ENCODE measurements at regions of chr17 and their contacts with region 1.

Region 1: DNA sequence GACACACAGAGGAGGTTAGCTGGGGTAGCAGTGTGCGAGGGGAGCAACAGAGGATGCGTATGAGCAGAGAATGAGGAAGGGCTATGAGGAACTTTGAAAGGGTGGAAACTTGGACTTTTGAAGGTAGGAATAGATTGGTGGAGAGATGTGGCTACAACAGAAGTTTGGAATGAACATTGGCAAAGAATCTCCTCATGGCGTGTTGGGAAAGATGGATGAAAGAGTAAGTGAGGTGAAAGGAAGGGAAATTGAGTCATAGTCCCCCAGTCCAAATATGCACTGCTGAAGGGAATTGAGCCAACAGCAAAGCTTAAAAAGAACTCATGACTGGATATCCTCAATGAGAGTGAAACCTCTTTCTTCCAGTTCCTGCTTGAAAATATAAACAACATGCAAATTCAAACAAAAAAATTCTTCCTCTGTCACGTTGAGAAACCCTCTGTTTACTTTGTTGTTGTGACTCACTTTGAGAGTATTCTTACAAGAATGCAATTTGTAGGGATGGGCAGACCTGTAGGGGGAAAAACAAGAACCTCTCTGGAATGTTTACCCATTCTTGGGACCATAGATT is 313.2 kb upstream of the KCNJ16 start:
- DNase-seq: peak; percentile 86
- H3K4me3 ChIP-seq: no peak overlapping the region
- H3K27ac ChIP-seq: peak overlapping the region; percentile 91
- H3K4me1 ChIP-seq: peaks cover 21% of the 10 kb centered on the region
- H3K27me3 ChIP-seq: no peaks in the 10 kb centered on the region
- CTCF ChIP-seq: no peak
- POLR2A ChIP-seq: no peak

Region 2: GRCh38 chr17:69501591-69502468 is 260.0 kb before region 1 on chr17:
- CTCF ChIA-PET with region 1: no interaction called
- POLR2A ChIA-PET with region 1: no interaction called
- dilution Hi-C with region 1: no loop called
- intact Hi-C with region 1: no loop called
- DNase-seq: peak; percentile 59
- H3K4me3 ChIP-seq: peak overlapping the region in 1 of 3 experiments; percentile 46
- H3K27ac ChIP-seq: peak overlapping the region; percentile 21
- H3K4me1 ChIP-seq: peaks cover 12% of the 10 kb centered on the region
- H3K27me3 ChIP-seq: no peaks in the 10 kb centered on the region
- CTCF ChIP-seq: no peak
- POLR2A ChIP-seq: no peak

Region 3: GRCh38 chr17:69672924-69673323 is 88.9 kb before region 1 on chr17:
- CTCF ChIA-PET with region 1: no interaction called
- POLR2A ChIA-PET with region 1: no interaction called
- dilution Hi-C with region 1: no loop called
- intact Hi-C with region 1: loop called (anchors 1 kb)
- DNase-seq: peak; percentile 81
- H3K4me3 ChIP-seq: no peak overlapping the region
- H3K27ac ChIP-seq: peak overlapping the region; percentile 70
- H3K4me1 ChIP-seq: peaks cover 18% of the 10 kb centered on the region
- H3K27me3 ChIP-seq: no peaks in the 10 kb centered on the region
- CTCF ChIP-seq: no peak
- POLR2A ChIP-seq: peak; percentile 65

Region 4: GRCh38 chr17:69733171-69734012 is 28.4 kb before region 1 on chr17:
- CTCF ChIA-PET with region 1: no interaction called
- POLR2A ChIA-PET with region 1: no interaction called
- dilution Hi-C with region 1: no loop called
- intact Hi-C with region 1: loop called (anchors 2 kb)
- DNase-seq: peak; percentile 67
- H3K4me3 ChIP-seq: no peak overlapping the region
- H3K27ac ChIP-seq: no peak overlapping the region
- H3K4me1 ChIP-seq: no peaks in the 10 kb centered on the region
- H3K27me3 ChIP-seq: no peaks in the 10 kb centered on the region
- CTCF ChIP-seq: no peak
- POLR2A ChIP-seq: no peak

Region 5: GRCh38 chr17:69773081-69773480 is 11.2 kb after region 1 on chr17:
- CTCF ChIA-PET with region 1: no interaction called
- POLR2A ChIA-PET with region 1: no interaction called
- dilution Hi-C with region 1: no loop called
- intact Hi-C with region 1: loop called (anchors 2 kb)
- DNase-seq: peak; percentile 40
- H3K4me3 ChIP-seq: no peak overlapping the region
- H3K27ac ChIP-seq: no peak overlapping the region
- H3K4me1 ChIP-seq: peaks cover 4% of the 10 kb centered on the region
- H3K27me3 ChIP-seq: no peaks in the 10 kb centered on the region
- CTCF ChIP-seq: no peak
- POLR2A ChIP-seq: no peak

Region 6: DNA sequence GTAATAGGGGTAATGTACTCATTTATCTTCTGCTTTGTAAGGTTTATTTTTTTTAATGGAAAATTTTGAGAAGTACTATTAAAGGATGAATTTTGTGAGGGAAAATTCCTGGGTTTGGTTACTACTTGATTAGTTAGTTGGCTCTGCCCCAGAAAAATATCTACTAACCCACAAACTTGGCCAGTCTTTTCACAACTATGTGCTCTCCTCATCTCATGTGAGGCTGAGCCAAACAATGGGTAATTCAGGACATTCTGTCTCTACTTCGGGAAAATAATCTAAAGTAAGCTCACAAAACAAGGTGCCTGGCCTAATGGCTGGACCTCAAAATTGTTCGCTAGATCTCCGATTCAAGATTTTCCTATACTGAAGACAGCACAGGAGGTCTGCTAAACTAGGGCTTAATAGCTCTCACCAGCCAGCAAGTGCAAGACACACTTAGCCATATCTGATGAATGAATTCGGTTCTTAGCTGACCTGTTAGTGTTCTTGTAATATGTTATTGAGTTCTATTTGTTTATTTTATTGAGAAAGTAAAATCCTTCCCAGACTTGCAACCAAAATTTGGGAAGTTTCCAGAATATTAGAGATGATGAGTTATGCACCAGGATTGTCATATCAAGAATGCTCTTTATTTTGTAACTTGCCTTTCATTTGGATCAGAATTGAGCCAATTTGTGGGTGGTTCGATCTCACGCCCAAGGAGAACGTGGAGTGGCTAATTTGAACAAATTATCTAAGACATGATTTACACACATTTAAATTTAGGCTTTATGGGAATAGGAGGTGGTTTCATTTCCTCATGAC is 318.9 kb after region 1 on chr17:
- CTCF ChIA-PET with region 1: no interaction called
- POLR2A ChIA-PET with region 1: no interaction called
- dilution Hi-C with region 1: no loop called
- intact Hi-C with region 1: no loop called
- DNase-seq: no peak
- H3K4me3 ChIP-seq: no peak overlapping the region
- H3K27ac ChIP-seq: no peak overlapping the region
- H3K4me1 ChIP-seq: no peaks in the 10 kb centered on the region
- H3K27me3 ChIP-seq: no peaks in the 10 kb centered on the region
- CTCF ChIP-seq: no peak
- POLR2A ChIP-seq: no peak

Region 7: GRCh38 chr17:70137451-70138230 is 375.8 kb after region 1 on chr17:
- CTCF ChIA-PET with region 1: no interaction called
- POLR2A ChIA-PET with region 1: no interaction called
- dilution Hi-C with region 1: no loop called
- intact Hi-C with region 1: loop called (anchors 1 kb)
- DNase-seq: peak; percentile 80
- H3K4me3 ChIP-seq: peak overlapping the region in 2 of 3 experiments; percentile 47 to 70
- H3K27ac ChIP-seq: peak overlapping the region; percentile 43
- H3K4me1 ChIP-seq: peaks cover 14% of the 10 kb centered on the region
- H3K27me3 ChIP-seq: no peaks in the 10 kb centered on the region
- CTCF ChIP-seq: no peak
- POLR2A ChIP-seq: no peak

Region 8: DNA sequence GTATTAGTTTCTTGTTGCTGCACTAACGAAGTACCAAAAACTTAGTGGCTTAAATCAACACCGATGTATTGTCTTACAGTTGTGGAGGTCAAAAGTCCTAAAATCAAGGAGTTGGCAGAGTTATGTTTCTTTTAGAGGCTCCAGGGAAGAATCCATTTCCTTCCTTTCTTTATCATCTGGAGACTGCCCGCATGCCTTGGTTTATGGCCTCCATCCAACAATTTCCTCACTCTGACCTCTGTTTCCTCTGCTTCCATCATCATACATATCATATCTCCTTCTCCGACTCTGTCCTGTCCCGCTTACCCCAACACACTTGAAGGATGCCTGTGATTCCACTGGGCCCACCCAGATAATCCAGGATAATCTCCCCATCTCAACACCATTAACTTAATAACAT is 1035.3 kb after region 1 on chr17:
- CTCF ChIA-PET with region 1: no interaction called
- POLR2A ChIA-PET with region 1: no interaction called
- dilution Hi-C with region 1: no loop called
- intact Hi-C with region 1: no loop called
- DNase-seq: no peak
- H3K4me3 ChIP-seq: no peak overlapping the region
- H3K27ac ChIP-seq: no peak overlapping the region
- H3K4me1 ChIP-seq: no peaks in the 10 kb centered on the region
- H3K27me3 ChIP-seq: no peaks in the 10 kb centered on the region
- CTCF ChIP-seq: no peak
- POLR2A ChIP-seq: no peak